ENCODE measurements at regions of chr4 and their contacts with region 1.

Region 1: GRCh38 chr4:83484500-83485461 is at the start of gene ABRAXAS1:
- DNase-seq: peak; percentile 96 to 98
- H3K4me3 ChIP-seq: peak within 1 kb of the TSS; percentile 67 to 80
- H3K27ac ChIP-seq: peak within 1 kb of the TSS; percentile 84 to 93
- H3K4me1 ChIP-seq: peaks cover 0 to 20% (median 7%) of the 10 kb centered on the region in 4 donors
- H3K27me3 ChIP-seq: no peaks in the 10 kb centered on the region
- CTCF ChIP-seq: no peak

Region 2: DNA sequence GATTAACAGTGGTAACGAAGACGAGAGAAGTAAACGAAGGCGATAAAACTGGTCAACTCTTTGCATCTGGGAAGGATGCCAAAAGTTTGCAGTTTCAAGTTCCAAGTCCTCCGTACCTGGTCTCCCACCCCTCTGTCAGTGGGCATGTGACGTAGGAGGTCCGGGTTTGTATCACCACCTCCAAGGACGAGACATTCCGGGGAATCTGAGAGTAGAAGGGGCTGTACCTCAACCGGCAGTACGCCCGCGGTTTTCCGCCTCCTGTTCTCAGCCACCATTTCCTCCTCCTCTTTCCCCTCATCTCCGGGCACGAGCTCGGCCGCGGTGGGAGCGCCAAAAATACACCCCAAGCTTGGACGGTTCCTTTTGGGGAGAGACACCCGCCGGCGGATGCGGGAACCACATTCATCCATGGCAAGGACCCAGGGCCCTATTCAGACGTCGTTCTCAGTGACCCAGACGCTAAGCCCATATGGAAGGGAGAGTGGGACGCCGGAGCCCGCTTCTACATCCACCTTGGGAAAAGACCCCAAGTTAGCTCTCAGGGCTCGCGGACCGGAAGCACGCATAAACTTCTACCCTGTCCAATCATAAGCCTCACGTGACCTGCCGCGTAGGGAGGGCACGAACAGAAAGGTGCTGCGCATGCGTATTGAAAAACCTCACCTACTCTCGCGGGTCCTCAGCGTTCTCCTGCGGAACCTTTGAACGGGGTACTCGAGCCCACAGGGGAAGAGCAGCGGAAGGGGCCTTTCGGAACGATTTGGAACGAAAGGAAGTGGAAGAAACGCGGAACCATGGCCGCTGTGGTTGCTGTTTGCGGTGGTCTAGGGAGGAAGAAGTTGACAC is 29.3 kb before region 1 on chr4 and contains the starts of genes HELQ and MRPS18C:
- intact Hi-C with region 1: loop called (anchors 2 kb)
- DNase-seq: peak; percentile 98 to 99
- H3K4me3 ChIP-seq: peak within 1 kb of the TSS; percentile 75 to 91
- H3K27ac ChIP-seq: peak within 1 kb of the TSS; percentile 95 to 98
- H3K4me1 ChIP-seq: peaks cover 0 to 29% (median 26%) of the 10 kb centered on the region in 4 donors
- H3K27me3 ChIP-seq: no peaks in the 10 kb centered on the region
- CTCF ChIP-seq: peak in 1 of 2 experiments; percentile 20